Activated B cell treated with CpG ODN at 0.5 μM for 24 hours (primary cell): ENCODE measurements at regions of chr18 and their contacts with region 1.

Region 1: GRCh38 chr18:29912351-29912750 is 1130.2 kb downstream of the DSC3 start:
- DNase-seq: no peak
- ATAC-seq: no peak
- H3K4me3 Mint-ChIP-seq: no peak overlapping the region
- H3K27ac Mint-ChIP-seq: no peak overlapping the region
- H3K4me1 Mint-ChIP-seq: no peaks in the 10 kb centered on the region
- H3K27me3 Mint-ChIP-seq: no peaks in the 10 kb centered on the region
- CTCF ChIP-seq: no peak

Region 2: GRCh38 chr18:28855524-28855923 is 1056.8 kb before region 1 on chr18:
- CTCF ChIA-PET with region 1: no interaction called
- POLR2A ChIA-PET with region 1: no interaction called
- intact Hi-C with region 1: no loop called
- DNase-seq: no peak
- ATAC-seq: no peak
- H3K4me3 Mint-ChIP-seq: no peak overlapping the region
- H3K27ac Mint-ChIP-seq: no peak overlapping the region
- H3K4me1 Mint-ChIP-seq: no peaks in the 10 kb centered on the region
- H3K27me3 Mint-ChIP-seq: no peaks in the 10 kb centered on the region
- CTCF ChIP-seq: no peak

Region 3: DNA sequence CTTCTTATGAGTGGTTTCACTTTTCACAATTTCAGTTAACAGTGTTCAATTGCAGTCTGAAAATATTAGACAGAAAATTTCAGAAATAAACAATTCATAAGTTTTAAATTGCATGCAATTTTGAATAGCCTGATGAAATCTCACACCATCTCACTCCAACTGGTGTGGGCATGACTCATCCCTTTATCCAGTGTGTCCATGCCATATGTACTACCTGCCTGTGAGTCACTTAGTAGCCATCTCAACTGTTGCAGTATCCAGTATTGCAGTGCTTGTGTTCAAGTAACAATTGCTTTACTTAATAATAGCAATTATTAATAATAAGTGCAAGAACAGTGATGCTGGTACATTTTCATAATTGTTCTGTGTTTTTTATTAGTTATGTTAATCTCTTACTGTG is 72.2 kb before region 1 on chr18:
- CTCF ChIA-PET with region 1: no interaction called
- POLR2A ChIA-PET with region 1: no interaction called
- intact Hi-C with region 1: loop called (anchors 10 kb)
- DNase-seq: no peak
- ATAC-seq: no peak
- H3K4me3 Mint-ChIP-seq: no peak overlapping the region
- H3K27ac Mint-ChIP-seq: no peak overlapping the region
- H3K4me1 Mint-ChIP-seq: no peaks in the 10 kb centered on the region
- H3K27me3 Mint-ChIP-seq: no peaks in the 10 kb centered on the region
- CTCF ChIP-seq: no peak